ENCODE measurements at regions of chr3 and their contacts with region 1.

Region 1: GRCh38 chr3:171703756-171704401 is 106.4 kb downstream of the PLD1 start:
- DNase-seq: no peak
- ATAC-seq: no peak
- H3K4me3 ChIP-seq: no peak overlapping the region
- H3K27ac ChIP-seq: no peak overlapping the region
- H3K4me1 ChIP-seq: peaks cover 0 to 10% of the 10 kb centered on the region in 2 donors
- H3K27me3 ChIP-seq: no peaks in the 10 kb centered on the region

Region 2: DNA sequence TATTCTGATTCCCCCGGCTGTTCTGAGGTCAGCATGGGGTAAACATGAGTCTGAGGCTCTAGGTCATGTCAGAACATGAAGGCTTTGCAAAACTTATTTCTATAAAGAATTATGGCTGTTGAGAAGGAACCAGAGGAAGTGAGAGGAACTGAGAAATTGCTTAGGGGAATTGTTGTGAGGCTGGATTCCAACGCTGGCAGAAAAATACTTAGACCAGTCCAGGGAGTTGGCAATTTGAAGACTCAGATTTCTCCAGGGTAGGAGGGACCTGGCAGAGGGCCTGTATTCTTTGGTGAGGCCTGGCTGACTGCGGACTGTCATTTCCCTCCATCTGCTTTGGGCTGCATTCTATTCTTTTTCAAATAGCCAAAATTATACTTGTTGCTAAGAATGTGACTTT is 49.1 kb before region 1 on chr3:
- intact Hi-C with region 1: loop called in 1 of 2 experiments (anchors 5 kb)
- DNase-seq: peak in 1 of 2 donors; percentile 81
- ATAC-seq: peak; percentile 91
- H3K4me3 ChIP-seq: no peak overlapping the region
- H3K27ac ChIP-seq: peak overlapping the region; percentile 9 to 26
- H3K4me1 ChIP-seq: peaks cover 0 to 5% of the 10 kb centered on the region in 2 donors
- H3K27me3 ChIP-seq: no peaks in the 10 kb centered on the region

Region 3: GRCh38 chr3:171772427-171773056 is 68.7 kb after region 1 on chr3:
- intact Hi-C with region 1: loop called (anchors 5 kb)
- DNase-seq: peak in 1 of 2 donors; percentile 69
- ATAC-seq: peak; percentile 58
- H3K4me3 ChIP-seq: no peak overlapping the region
- H3K27ac ChIP-seq: no peak overlapping the region
- H3K4me1 ChIP-seq: peaks cover 4 to 5% of the 10 kb centered on the region in 2 donors
- H3K27me3 ChIP-seq: no peaks in the 10 kb centered on the region

Region 4: GRCh38 chr3:171901615-171902312 is 197.9 kb after region 1 on chr3:
- intact Hi-C with region 1: no loop called
- DNase-seq: no peak
- ATAC-seq: no peak
- H3K4me3 ChIP-seq: no peak overlapping the region
- H3K27ac ChIP-seq: no peak overlapping the region
- H3K4me1 ChIP-seq: no peaks in the 10 kb centered on the region
- H3K27me3 ChIP-seq: no peaks in the 10 kb centered on the region